ENCODE measurements at regions of chr17 and their contacts with region 1.

Region 1: GRCh38 chr17:65694601-65695000 is 133.2 kb upstream of the AXIN2 start:
- DNase-seq: no peak
- H3K4me3 ChIP-seq: no peak overlapping the region
- H3K27ac ChIP-seq: no peak overlapping the region
- H3K4me1 ChIP-seq: peaks cover 0 to 21% (median 9%) of the 10 kb centered on the region in 4 donors
- H3K27me3 ChIP-seq: no peaks in the 10 kb centered on the region
- CTCF ChIP-seq: no peak
- EP300 ChIP-seq: no peak
- POLR2A ChIP-seq: no peak

Region 2: GRCh38 chr17:65670667-65671371 is 23.8 kb before region 1 on chr17:
- in situ Hi-C with region 1: no loop called
- intact Hi-C with region 1: loop called (anchors 2 kb)
- DNase-seq: no peak
- H3K4me3 ChIP-seq: no peak overlapping the region
- H3K27ac ChIP-seq: no peak overlapping the region
- H3K4me1 ChIP-seq: no peaks in the 10 kb centered on the region
- H3K27me3 ChIP-seq: no peaks in the 10 kb centered on the region
- CTCF ChIP-seq: no peak
- EP300 ChIP-seq: no peak
- POLR2A ChIP-seq: no peak